Calu3 (cell line): ENCODE measurements at regions of chr4 and their contacts with region 1.

Region 1: GRCh38 chr4:110769578-110769977 is 146.7 kb upstream of the PITX2 start:
- DNase-seq: no peak
- H3K4me3 Mint-ChIP-seq: no peak overlapping the region
- H3K27ac Mint-ChIP-seq: no peak overlapping the region
- H3K4me1 Mint-ChIP-seq: no peaks in the 10 kb centered on the region
- H3K27me3 Mint-ChIP-seq: no peaks in the 10 kb centered on the region
- CTCF ChIP-seq: no peak

Region 2: GRCh38 chr4:110418641-110419040 is 350.9 kb before region 1 on chr4:
- CTCF ChIA-PET with region 1: no interaction called
- intact Hi-C with region 1: no loop called
- DNase-seq: no peak
- H3K4me3 Mint-ChIP-seq: no peak overlapping the region
- H3K27ac Mint-ChIP-seq: no peak overlapping the region
- H3K4me1 Mint-ChIP-seq: no peaks in the 10 kb centered on the region
- H3K27me3 Mint-ChIP-seq: no peaks in the 10 kb centered on the region
- CTCF ChIP-seq: no peak

Region 3: GRCh38 chr4:110567214-110567613 is 202.4 kb before region 1 on chr4:
- CTCF ChIA-PET with region 1: no interaction called
- intact Hi-C with region 1: loop called (anchors 5 kb)
- DNase-seq: no peak
- H3K4me3 Mint-ChIP-seq: no peak overlapping the region
- H3K27ac Mint-ChIP-seq: no peak overlapping the region
- H3K4me1 Mint-ChIP-seq: no peaks in the 10 kb centered on the region
- H3K27me3 Mint-ChIP-seq: no peaks in the 10 kb centered on the region
- CTCF ChIP-seq: no peak

Region 4: GRCh38 chr4:110823251-110823650 is 53.7 kb after region 1 on chr4:
- CTCF ChIA-PET with region 1: no interaction called
- intact Hi-C with region 1: no loop called
- DNase-seq: no peak
- H3K4me3 Mint-ChIP-seq: no peak overlapping the region
- H3K27ac Mint-ChIP-seq: no peak overlapping the region
- H3K4me1 Mint-ChIP-seq: no peaks in the 10 kb centered on the region
- H3K27me3 Mint-ChIP-seq: no peaks in the 10 kb centered on the region
- CTCF ChIP-seq: no peak